A673 (cell line): ENCODE measurements at regions of chr1 and their contacts with region 1.

Region 1: GRCh38 chr1:38873027-38873969 is at the start of gene MYCBP:
- DNase-seq: peak; percentile 97
- H3K4me3 ChIP-seq: peak within 1 kb of the TSS; percentile 83
- H3K27ac ChIP-seq: peak within 1 kb of the TSS; percentile 61
- H3K4me1 ChIP-seq: peaks cover 4% of the 10 kb centered on the region
- H3K27me3 ChIP-seq: no peaks in the 10 kb centered on the region
- CTCF ChIP-seq: no peak
- total RNA-seq, gene MYCBP: 25.1 and 31.6 TPM in 2 replicates

Region 2: GRCh38 chr1:37656881-37657280 is 1216.4 kb before region 1 on chr1:
- CTCF ChIA-PET with region 1: no interaction called
- POLR2A ChIA-PET with region 1: interaction called, 13 read pairs
- intact Hi-C with region 1: no loop called
- DNase-seq: no peak
- H3K4me3 ChIP-seq: no peak overlapping the region
- H3K27ac ChIP-seq: no peak overlapping the region
- H3K4me1 ChIP-seq: no peaks in the 10 kb centered on the region
- H3K27me3 ChIP-seq: no peaks in the 10 kb centered on the region
- CTCF ChIP-seq: no peak

Region 3: GRCh38 chr1:38735641-38736161 is 137.6 kb before region 1 on chr1:
- CTCF ChIA-PET with region 1: no interaction called
- POLR2A ChIA-PET with region 1: no interaction called
- intact Hi-C with region 1: no loop called
- DNase-seq: no peak
- H3K4me3 ChIP-seq: no peak overlapping the region
- H3K27ac ChIP-seq: no peak overlapping the region
- H3K4me1 ChIP-seq: peaks cover 1% of the 10 kb centered on the region
- H3K27me3 ChIP-seq: no peaks in the 10 kb centered on the region
- CTCF ChIP-seq: no peak

Region 4: DNA sequence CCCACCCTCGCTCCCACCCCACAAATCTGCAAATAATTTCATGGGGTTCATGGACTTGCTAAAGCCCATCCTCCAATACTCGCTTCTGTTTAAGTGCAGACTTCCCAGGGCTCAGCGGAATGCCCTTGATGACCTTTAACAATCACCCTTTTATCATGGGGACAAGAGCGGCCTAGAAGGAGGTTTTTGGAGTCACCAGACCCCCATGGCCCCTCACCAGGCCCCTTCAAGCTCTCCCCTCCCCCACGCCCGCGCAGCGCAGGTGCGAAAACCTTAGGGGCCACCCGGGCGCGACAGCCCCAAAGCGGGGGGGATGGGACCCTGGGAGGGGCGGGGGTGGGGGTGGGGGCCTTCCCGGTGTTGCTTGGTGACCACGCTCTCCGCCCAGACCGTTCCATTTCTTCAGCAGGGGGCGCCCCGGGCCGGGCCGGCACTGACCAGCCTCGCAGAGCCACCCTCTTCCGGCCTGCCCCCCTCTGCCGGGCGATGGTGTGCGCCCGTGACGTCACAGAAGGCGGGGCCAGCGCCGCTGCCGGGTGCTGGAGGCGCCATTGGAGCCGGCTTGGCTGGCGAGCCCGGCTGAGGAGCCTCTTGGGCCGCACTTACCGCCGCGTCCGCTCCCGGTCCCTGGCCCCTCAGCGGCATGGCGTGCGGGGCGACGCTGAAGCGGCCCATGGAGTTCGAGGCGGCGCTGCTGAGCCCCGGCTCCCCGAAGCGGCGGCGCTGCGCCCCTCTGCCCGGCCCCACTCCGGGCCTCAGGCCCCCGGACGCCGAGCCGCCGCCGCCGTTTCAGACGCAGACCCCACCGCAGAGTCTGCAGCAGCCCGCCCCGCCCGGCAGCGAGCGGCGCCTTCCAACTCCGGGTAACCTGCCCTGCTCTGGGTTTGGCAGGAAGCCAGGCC is 117.7 kb after region 1 on chr1 and contains the start of gene AKIRIN1:
- CTCF ChIA-PET with region 1: no interaction called
- POLR2A ChIA-PET with region 1: no interaction called
- intact Hi-C with region 1: loop called (anchors 5 kb)
- DNase-seq: peak; percentile 97
- H3K4me3 ChIP-seq: peak within 1 kb of the TSS; percentile 99
- H3K27ac ChIP-seq: peak within 1 kb of the TSS; percentile 98
- H3K4me1 ChIP-seq: peaks cover 13% of the 10 kb centered on the region
- H3K27me3 ChIP-seq: no peaks in the 10 kb centered on the region
- CTCF ChIP-seq: no peak
- total RNA-seq, gene AKIRIN1: 76.3 and 87.0 TPM in 2 replicates